ENCODE measurements at regions of chrX and their contacts with region 1.

Region 1: DNA sequence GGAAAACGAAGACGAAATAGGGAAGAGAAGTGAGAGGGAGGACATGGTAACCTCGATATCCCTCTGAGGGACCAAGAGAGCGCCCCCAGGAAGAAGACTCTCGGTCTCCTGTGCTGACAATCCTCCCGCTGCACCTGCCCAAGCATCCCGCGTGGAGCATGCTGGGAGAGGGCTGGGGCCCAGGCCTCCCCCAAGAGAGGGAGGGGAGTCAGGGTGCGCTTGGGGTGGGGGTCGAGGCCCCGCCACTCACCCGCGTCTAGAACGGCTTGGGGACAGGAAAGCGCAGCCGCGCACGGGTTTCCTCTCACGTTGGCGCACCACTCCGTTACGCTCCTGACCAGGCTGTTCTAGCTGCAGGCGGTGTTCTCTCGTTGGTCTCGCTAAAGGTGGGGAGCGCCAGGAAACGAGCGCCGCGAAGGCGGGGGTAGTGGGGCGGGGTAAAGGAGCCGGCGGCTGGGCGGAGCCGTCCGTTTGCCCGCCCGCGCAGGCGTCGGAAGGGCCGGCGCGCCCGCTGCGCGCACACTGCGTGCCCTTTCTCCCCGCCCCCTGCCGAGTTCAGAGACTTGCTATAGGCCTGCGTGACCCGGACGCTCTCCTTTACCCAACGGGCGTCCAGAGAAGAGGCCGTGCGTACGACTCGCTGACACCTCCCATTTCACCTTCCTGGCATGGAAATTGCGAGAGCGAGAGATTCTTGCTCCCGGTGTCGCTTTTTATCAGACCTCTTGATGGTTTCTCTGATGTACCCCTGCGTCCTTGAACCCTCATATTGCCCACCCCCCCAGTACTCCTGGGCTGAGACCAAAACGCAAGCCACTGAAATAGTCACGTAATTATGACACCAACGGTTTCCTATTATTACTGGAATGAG is at the start of gene C1GALT1C1:
- DNase-seq: peak; percentile 86 to 94 (median 89)
- H3K4me3 ChIP-seq: peak within 1 kb of the TSS; percentile 51
- H3K27ac ChIP-seq: peak within 1 kb of the TSS in 1 of 2 donors; percentile 67
- H3K4me1 ChIP-seq: no peaks in the 10 kb centered on the region
- H3K27me3 ChIP-seq: no peaks in the 10 kb centered on the region
- CTCF ChIP-seq: no peak
- EP300 ChIP-seq: no peak
- POLR2A ChIP-seq: no peak
- total RNA-seq, gene C1GALT1C1: 11.4 to 28.0 (median 15.5) TPM

Region 2: DNA sequence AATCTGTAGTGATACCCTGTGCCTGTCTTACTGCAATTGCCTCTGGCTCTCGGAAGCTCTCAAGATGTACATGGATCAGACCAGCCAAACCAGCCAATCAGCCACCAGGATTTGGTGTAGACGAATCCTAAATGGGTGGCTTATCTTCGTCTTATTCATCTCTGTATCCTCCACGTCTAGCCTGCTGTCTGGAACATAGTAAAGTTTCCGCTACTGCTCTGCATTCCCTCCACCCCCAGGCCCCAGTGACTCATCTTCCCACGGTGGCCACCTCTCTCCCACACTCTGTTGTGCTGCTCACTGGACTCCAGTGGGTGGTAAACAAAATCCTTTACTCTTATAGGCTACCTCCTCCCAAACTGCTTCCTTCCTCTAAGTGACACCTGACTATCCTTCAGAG is 974.8 kb before region 1 on chrX:
- intact Hi-C with region 1: no loop called
- DNase-seq: peak in 4 of 5 donors; percentile 36 to 58 (median 48)
- H3K4me3 ChIP-seq: no peak overlapping the region
- H3K27ac ChIP-seq: no peak overlapping the region
- H3K4me1 ChIP-seq: no peaks in the 10 kb centered on the region
- H3K27me3 ChIP-seq: no peaks in the 10 kb centered on the region
- CTCF ChIP-seq: no peak
- EP300 ChIP-seq: no peak
- POLR2A ChIP-seq: no peak

Region 3: GRCh38 chrX:120560842-120561633 is 68.9 kb before region 1 on chrX and contains the start of gene CUL4B:
- intact Hi-C with region 1: loop called in 1 of 4 experiments (anchors 2 kb)
- DNase-seq: peak; percentile 90 to 94 (median 91)
- H3K4me3 ChIP-seq: peak within 1 kb of the TSS; percentile 53
- H3K27ac ChIP-seq: peak within 1 kb of the TSS; percentile 98 to 99
- H3K4me1 ChIP-seq: no peaks in the 10 kb centered on the region
- H3K27me3 ChIP-seq: no peaks in the 10 kb centered on the region
- CTCF ChIP-seq: no peak
- EP300 ChIP-seq: no peak
- POLR2A ChIP-seq: peak; percentile 12
- total RNA-seq, gene CUL4B: 36.1 to 64.9 (median 47.6) TPM

Region 4: DNA sequence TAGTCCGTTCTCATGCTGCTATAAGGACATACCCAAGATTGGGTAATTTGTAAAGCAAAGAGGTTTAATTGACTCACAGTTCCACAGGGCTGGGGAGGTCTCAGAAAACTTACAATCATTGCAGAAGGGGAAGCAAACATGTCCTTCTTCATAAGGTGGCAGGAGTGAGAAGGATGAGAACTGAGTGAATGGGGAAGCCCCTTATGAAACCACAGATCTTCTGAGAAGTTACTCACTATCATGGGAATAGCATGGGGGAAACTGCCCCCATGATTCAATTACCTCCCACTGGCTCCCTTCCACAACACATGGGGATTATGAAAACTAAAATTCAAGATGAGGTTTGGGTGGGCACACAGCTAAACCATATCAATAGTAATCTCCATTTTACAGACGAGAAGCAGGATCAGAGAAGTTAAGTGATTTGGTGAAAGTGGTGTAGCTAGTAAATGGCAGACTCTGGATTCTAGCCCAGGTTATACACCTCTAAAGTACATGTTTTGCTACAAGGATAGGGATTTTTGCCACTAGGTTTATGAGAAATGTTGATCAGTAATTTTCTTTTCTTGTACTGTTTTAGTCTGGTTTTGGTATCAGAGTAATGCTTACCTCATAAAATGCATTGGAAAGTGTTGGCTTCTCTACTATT is 47.2 kb after region 1 on chrX:
- intact Hi-C with region 1: no loop called
- DNase-seq: no peak
- H3K4me3 ChIP-seq: no peak overlapping the region
- H3K27ac ChIP-seq: no peak overlapping the region
- H3K4me1 ChIP-seq: no peaks in the 10 kb centered on the region
- H3K27me3 ChIP-seq: no peaks in the 10 kb centered on the region
- CTCF ChIP-seq: no peak
- EP300 ChIP-seq: no peak
- POLR2A ChIP-seq: no peak